ENCODE measurements at regions of chr10 and their contacts with region 1.

Region 1: GRCh38 chr10:26556748-26557640 is 118.9 kb downstream of the APBB1IP start:
- DNase-seq: peak in 1 of 2 experiments; percentile 73
- H3K4me3 ChIP-seq: no peak overlapping the region
- H3K4me3 Mint-ChIP-seq: no peak overlapping the region
- H3K27ac Mint-ChIP-seq: no peak overlapping the region
- H3K4me1 ChIP-seq: peaks cover 17% of the 10 kb centered on the region
- H3K4me1 Mint-ChIP-seq: peaks cover 13% of the 10 kb centered on the region
- H3K27me3 ChIP-seq: no peaks in the 10 kb centered on the region
- H3K27me3 Mint-ChIP-seq: no peaks in the 10 kb centered on the region
- CTCF ChIP-seq: peak; percentile 96 to 99

Region 2: DNA sequence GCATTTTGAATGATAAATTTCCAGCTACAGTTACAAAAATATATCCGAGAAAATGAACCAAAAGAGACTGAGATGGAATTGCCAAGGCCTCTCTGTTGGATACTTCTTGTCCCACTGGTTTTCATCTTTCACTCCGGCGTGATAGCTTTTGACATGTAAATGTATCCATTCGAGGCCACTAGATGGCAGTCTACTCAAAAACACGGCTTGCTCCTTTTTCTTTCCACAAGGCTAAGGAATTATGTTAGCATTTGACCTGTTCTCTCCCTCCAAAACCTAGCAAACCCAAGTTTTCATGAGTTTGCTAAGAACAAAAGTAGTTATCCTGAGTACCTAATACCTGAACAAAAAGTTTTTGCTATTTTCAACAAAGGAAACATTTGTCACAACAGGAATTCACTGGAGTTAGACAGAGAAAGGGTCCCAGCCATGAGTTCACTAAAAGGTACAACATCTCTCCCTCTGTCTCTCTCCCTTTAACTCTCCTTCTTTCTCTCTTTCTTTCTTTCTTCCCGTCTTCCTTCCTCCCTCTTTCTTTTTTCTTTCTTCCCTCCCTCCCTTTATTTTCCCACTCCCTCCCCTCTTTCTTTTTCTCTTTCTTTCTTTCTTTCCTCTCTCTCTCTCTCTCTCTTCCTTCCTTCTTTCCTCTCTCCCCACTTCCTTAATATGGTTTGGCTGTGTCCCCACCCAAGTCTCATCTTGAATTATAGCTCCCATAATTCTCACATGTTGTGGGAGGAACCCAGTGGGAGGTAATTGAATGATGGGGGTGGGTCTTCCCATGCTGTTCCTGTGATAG is 830.9 kb before region 1 on chr10:
- CTCF ChIA-PET with region 1: no interaction called
- POLR2A ChIA-PET with region 1: no interaction called
- intact Hi-C with region 1: loop called (anchors 1 kb)
- DNase-seq: peak; percentile 51 to 62
- H3K4me3 ChIP-seq: no peak overlapping the region
- H3K4me3 Mint-ChIP-seq: no peak overlapping the region
- H3K27ac Mint-ChIP-seq: no peak overlapping the region
- H3K4me1 ChIP-seq: no peaks in the 10 kb centered on the region
- H3K4me1 Mint-ChIP-seq: no peaks in the 10 kb centered on the region
- H3K27me3 ChIP-seq: no peaks in the 10 kb centered on the region
- H3K27me3 Mint-ChIP-seq: peaks cover 5% of the 10 kb centered on the region
- CTCF ChIP-seq: peak; percentile 78

Region 3: DNA sequence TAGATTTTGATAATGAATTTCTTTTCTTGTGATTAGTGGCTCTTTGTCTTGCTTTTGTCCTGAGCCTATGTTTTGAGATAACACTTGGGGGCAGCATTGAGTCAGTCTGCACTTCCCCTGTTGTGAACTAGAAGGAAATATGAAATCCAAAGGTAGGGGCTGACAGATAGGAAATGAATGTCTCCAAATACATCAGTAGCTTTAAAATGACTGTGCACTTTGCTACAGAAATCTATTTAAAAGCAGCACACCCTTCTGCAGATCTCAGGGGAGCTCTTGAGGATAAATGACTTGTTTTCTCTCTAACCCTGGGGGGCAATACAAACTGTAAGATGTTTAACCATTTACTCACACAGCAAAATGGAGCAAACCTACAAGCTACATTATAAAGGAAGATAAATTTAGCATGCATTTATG is 798.9 kb before region 1 on chr10:
- CTCF ChIA-PET with region 1: no interaction called
- POLR2A ChIA-PET with region 1: no interaction called
- intact Hi-C with region 1: loop called (anchors 1 kb)
- DNase-seq: peak; percentile 42 to 52
- H3K4me3 ChIP-seq: no peak overlapping the region
- H3K4me3 Mint-ChIP-seq: no peak overlapping the region
- H3K27ac Mint-ChIP-seq: no peak overlapping the region
- H3K4me1 ChIP-seq: no peaks in the 10 kb centered on the region
- H3K4me1 Mint-ChIP-seq: no peaks in the 10 kb centered on the region
- H3K27me3 ChIP-seq: no peaks in the 10 kb centered on the region
- H3K27me3 Mint-ChIP-seq: peaks cover 2% of the 10 kb centered on the region
- CTCF ChIP-seq: peak; percentile 65 to 72

Region 4: GRCh38 chr10:26080939-26081338 is 476.1 kb before region 1 on chr10:
- CTCF ChIA-PET with region 1: no interaction called
- POLR2A ChIA-PET with region 1: interaction called, 11 read pairs
- intact Hi-C with region 1: no loop called
- DNase-seq: peak; percentile 7 to 57
- H3K4me3 ChIP-seq: no peak overlapping the region
- H3K4me3 Mint-ChIP-seq: no peak overlapping the region
- H3K27ac Mint-ChIP-seq: no peak overlapping the region
- H3K4me1 ChIP-seq: peaks cover 8% of the 10 kb centered on the region
- H3K4me1 Mint-ChIP-seq: no peaks in the 10 kb centered on the region
- H3K27me3 ChIP-seq: no peaks in the 10 kb centered on the region
- H3K27me3 Mint-ChIP-seq: peaks cover 8% of the 10 kb centered on the region
- CTCF ChIP-seq: no peak

Region 5: GRCh38 chr10:26516540-26517101 is 40.4 kb before region 1 on chr10:
- CTCF ChIA-PET with region 1: interaction called, 10 read pairs
- POLR2A ChIA-PET with region 1: no interaction called
- intact Hi-C with region 1: loop called (anchors 1 kb)
- DNase-seq: peak; percentile 87 to 92
- H3K4me3 ChIP-seq: peak overlapping the region; percentile 16
- H3K4me3 Mint-ChIP-seq: peak overlapping the region; percentile 69
- H3K27ac Mint-ChIP-seq: peak overlapping the region; percentile 95
- H3K4me1 ChIP-seq: peaks cover 32% of the 10 kb centered on the region
- H3K4me1 Mint-ChIP-seq: peaks cover 33% of the 10 kb centered on the region
- H3K27me3 ChIP-seq: no peaks in the 10 kb centered on the region
- H3K27me3 Mint-ChIP-seq: no peaks in the 10 kb centered on the region
- CTCF ChIP-seq: peak in 1 of 2 experiments; percentile 47

Measured in Caco-2 (cell line).